ENCODE measurements at regions of chr16 and their contacts with region 1.

Region 1: DNA sequence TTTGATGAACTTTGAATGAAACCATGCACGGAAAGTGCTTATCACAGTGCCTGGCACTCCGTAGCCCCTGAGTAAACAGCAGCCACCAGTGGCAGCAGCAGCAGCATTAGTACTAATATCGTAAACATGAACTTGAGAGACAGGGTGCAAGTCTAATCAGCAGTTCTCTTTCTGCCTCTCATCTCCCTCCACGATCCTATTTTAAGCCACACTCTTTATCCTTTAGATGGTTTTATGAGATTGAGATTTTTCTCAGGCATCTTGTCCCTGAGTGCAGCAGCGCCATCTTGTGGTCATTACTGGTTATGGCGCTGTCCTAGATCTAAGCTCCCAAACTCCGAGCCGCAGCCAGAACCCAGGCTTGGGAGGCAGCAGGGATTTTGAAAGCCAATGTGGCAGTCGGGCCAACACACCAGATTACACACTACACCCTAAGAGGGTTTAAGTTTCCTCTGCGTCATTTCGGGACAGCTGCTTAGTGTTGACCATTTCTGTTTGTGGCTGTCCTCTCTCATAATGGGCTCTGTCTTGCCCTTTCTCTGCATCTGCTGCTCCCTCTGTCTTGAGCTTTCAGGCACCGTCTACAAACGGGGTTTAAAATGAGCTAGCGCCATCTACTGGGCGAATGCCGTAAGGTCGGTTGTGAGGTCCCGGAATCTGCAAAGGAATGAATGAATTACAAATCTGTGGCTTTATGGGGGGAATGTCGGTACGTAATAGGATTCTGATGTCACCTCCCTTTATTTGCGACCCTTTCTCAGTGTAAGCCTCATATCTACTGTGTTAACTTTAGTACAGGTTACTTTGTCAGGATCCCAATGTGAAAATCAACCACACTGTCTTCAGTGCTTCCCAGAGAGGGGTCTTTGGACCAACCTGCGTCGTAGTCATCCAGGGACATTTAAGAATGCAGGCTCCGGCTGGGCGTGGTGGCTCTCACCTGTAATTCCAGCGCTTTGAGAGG is 64.5 kb downstream of the CYLD start:
- DNase-seq: peak; percentile 61 to 94 (median 80)
- ATAC-seq: peak; percentile 91 to 93 (median 92)
- H3K4me3 ChIP-seq: peak overlapping the region in 1 of 2 donors; percentile 22
- H3K4me3 Mint-ChIP-seq: peak overlapping the region; percentile 63 to 78 (median 65)
- H3K27ac ChIP-seq: peak overlapping the region; percentile 5
- H3K27ac Mint-ChIP-seq: peak overlapping the region; percentile 72 to 78
- H3K4me1 ChIP-seq: peaks cover 0 to 15% of the 10 kb centered on the region in 2 experiments
- H3K4me1 Mint-ChIP-seq: peaks cover 13 to 21% (median 16%) of the 10 kb centered on the region in 3 donors
- H3K27me3 ChIP-seq: no peaks in the 10 kb centered on the region
- H3K27me3 Mint-ChIP-seq: no peaks in the 10 kb centered on the region

Region 2: GRCh38 chr16:50210266-50211038 is 595.9 kb before region 1 on chr16:
- CTCF ChIA-PET with region 1: interaction called, 10 to 39 read pairs
- POLR2A ChIA-PET with region 1: no interaction called
- DNase-seq: peak; percentile 36 to 76 (median 59)
- ATAC-seq: peak; percentile 86 to 95 (median 94)
- H3K4me3 ChIP-seq: no peak overlapping the region
- H3K4me3 Mint-ChIP-seq: no peak overlapping the region
- H3K27ac ChIP-seq: no peak overlapping the region
- H3K27ac Mint-ChIP-seq: peak overlapping the region; percentile 72 to 77
- H3K4me1 ChIP-seq: peaks cover 0 to 4% of the 10 kb centered on the region in 2 experiments
- H3K4me1 Mint-ChIP-seq: peaks cover 33 to 41% (median 36%) of the 10 kb centered on the region in 3 donors
- H3K27me3 ChIP-seq: no peaks in the 10 kb centered on the region
- H3K27me3 Mint-ChIP-seq: no peaks in the 10 kb centered on the region

Region 3: DNA sequence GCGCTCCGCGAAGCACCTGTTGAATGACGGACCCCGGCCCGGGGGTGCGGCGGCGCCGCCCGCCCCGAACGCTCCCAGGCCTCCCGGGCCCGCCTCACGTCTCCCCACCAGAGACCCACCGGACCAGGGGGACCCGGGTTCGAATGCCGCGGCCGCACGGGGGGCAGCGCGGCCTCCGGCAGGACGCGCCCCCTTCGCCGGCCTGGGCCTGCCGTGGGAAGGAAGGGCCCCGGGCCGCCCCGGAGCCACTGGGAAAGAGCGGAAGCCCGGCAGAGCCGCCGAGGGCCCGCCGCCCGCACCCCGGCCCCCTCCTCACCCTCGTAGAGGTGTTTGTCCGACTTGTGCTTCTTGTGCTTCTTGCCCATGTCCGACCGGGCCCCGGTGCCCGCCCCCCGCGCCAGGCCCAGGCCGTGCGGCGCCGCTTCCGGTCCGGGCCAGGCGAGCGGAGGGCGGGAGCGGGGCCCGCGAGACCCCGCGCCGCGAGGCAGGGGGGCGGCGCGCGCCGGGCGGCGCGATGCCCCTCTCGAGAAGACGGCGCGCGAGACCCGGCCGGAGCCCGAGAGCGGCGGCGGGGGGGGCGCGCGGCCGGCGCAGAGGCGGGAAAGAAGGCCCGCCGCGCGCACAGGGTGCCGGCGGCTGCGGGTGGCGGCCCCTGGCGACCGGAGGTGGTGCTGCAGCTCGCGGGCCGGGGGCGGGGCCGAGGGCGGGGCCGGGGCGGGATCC is 437.8 kb before region 1 on chr16 and contains the start of gene BRD7:
- CTCF ChIA-PET with region 1: interaction called, 3 to 12 read pairs
- POLR2A ChIA-PET with region 1: no interaction called
- DNase-seq: peak; percentile 45 to 88 (median 67)
- ATAC-seq: peak; percentile 78 to 92 (median 87)
- H3K4me3 ChIP-seq: peak within 1 kb of the TSS; percentile 56 to 86
- H3K4me3 Mint-ChIP-seq: peak within 1 kb of the TSS; percentile 83 to 88 (median 87)
- H3K27ac ChIP-seq: peak within 1 kb of the TSS; percentile 73
- H3K27ac Mint-ChIP-seq: peak within 1 kb of the TSS; percentile 93 to 96
- H3K4me1 ChIP-seq: peaks cover 20 to 21% of the 10 kb centered on the region in 2 experiments
- H3K4me1 Mint-ChIP-seq: peaks cover 51 to 63% (median 54%) of the 10 kb centered on the region in 3 donors
- H3K27me3 ChIP-seq: peaks cover 0 to 1% of the 10 kb centered on the region in 2 experiments
- H3K27me3 Mint-ChIP-seq: no peaks in the 10 kb centered on the region
- total RNA-seq, gene BRD7: 62.9 to 115 (median 75.4) TPM

Region 4: DNA sequence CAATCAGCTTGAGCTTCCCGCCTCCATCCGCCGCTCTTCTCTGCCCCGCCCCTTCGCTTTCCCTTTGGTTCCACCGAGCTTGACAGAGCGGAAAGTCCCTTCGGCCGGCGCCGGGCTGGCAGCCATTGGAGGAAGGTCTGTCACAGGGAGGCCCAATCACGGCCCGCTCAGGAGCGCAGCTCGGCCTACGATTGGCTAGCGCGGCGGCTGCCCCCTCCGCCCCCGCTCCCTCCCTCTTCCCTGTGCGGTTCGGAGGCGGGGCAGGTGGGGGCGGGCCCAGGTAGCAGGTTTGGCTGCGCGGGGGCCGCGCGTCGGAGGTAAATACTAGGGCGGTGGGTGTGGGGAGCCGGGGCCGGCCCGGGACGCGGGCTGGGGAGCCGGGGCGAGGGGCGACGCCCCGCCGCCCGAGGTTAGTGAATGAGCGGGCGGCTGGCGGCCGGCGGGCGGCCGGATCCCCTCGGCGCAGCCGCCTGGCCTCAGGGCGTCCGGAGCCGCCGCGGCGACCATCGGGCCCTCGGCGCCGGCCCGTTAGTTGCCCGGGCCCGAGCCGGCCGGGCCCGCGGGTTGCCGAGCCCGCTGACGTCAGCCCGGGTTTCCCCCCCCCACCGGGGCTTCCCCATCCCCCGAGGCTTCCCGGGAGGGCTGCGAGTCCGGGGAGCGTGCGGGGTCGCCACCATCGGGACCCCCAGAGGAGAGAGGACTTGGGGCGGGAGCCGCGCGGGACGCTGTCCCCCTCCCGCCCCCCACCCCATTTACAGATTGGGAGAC is 64.4 kb before region 1 on chr16 and contains the start of gene CYLD:
- CTCF ChIA-PET with region 1: interaction called in 1 of 2 experiments, 52 read pairs
- POLR2A ChIA-PET with region 1: no interaction called
- DNase-seq: peak; percentile 93 to 100 (median 100)
- ATAC-seq: peak; percentile 90
- H3K4me3 ChIP-seq: peak within 1 kb of the TSS; percentile 95 to 99
- H3K4me3 Mint-ChIP-seq: peak within 1 kb of the TSS; percentile 93 to 98 (median 95)
- H3K27ac ChIP-seq: peak within 1 kb of the TSS; percentile 100
- H3K27ac Mint-ChIP-seq: peak within 1 kb of the TSS; percentile 97 to 98
- H3K4me1 ChIP-seq: peaks cover 17 to 26% of the 10 kb centered on the region in 2 experiments
- H3K4me1 Mint-ChIP-seq: peaks cover 40 to 58% (median 52%) of the 10 kb centered on the region in 3 donors
- H3K27me3 ChIP-seq: no peaks in the 10 kb centered on the region
- H3K27me3 Mint-ChIP-seq: no peaks in the 10 kb centered on the region
- total RNA-seq, gene CYLD: 243 to 380 (median 294) TPM

Region 5: DNA sequence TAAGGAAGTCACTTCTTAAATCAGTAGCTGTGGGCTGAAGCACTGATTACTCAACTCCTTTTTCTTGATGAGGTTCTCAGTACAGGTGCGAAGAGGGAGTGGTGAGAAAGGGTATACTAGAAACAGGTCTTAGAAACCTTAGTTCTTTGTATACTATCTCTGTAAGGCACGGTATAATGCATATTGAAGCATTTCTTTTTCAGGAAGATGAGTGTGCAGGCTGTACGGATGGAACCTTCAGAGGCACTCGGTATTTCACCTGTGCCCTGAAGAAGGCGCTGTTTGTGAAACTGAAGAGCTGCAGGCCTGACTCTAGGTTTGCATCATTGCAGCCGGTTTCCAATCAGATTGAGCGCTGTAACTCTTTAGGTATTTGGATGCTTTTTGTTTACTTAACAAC is 25.3 kb before region 1 on chr16:
- CTCF ChIA-PET with region 1: interaction called, 5 to 25 read pairs
- POLR2A ChIA-PET with region 1: no interaction called
- DNase-seq: peak in 4 of 35 experiments; percentile 5 to 46 (median 10)
- ATAC-seq: peak; percentile 51 to 72 (median 64)
- H3K4me3 ChIP-seq: no peak overlapping the region
- H3K4me3 Mint-ChIP-seq: peak overlapping the region; percentile 26 to 54 (median 49)
- H3K27ac ChIP-seq: peak overlapping the region; percentile 29
- H3K27ac Mint-ChIP-seq: peak overlapping the region; percentile 86 to 95
- H3K4me1 ChIP-seq: peaks cover 2 to 10% of the 10 kb centered on the region in 2 experiments
- H3K4me1 Mint-ChIP-seq: peaks cover 65 to 72% (median 66%) of the 10 kb centered on the region in 3 donors
- H3K27me3 ChIP-seq: no peaks in the 10 kb centered on the region
- H3K27me3 Mint-ChIP-seq: no peaks in the 10 kb centered on the region

Region 6: GRCh38 chr16:50932348-50932916 is 126.1 kb after region 1 on chr16:
- CTCF ChIA-PET with region 1: no interaction called
- POLR2A ChIA-PET with region 1: no interaction called
- DNase-seq: no peak
- ATAC-seq: no peak
- H3K4me3 ChIP-seq: no peak overlapping the region
- H3K4me3 Mint-ChIP-seq: no peak overlapping the region
- H3K27ac ChIP-seq: no peak overlapping the region
- H3K27ac Mint-ChIP-seq: no peak overlapping the region
- H3K4me1 ChIP-seq: no peaks in the 10 kb centered on the region
- H3K4me1 Mint-ChIP-seq: no peaks in the 10 kb centered on the region
- H3K27me3 ChIP-seq: peaks cover 0 to 16% of the 10 kb centered on the region in 2 experiments
- H3K27me3 Mint-ChIP-seq: peaks cover 24 to 37% of the 10 kb centered on the region in 2 donors